Activated B cell treated with CpG ODN at 0.5 μM for 24 hours (primary cell): ENCODE measurements at regions of chr17 and their contacts with region 1.

Region 1: DNA sequence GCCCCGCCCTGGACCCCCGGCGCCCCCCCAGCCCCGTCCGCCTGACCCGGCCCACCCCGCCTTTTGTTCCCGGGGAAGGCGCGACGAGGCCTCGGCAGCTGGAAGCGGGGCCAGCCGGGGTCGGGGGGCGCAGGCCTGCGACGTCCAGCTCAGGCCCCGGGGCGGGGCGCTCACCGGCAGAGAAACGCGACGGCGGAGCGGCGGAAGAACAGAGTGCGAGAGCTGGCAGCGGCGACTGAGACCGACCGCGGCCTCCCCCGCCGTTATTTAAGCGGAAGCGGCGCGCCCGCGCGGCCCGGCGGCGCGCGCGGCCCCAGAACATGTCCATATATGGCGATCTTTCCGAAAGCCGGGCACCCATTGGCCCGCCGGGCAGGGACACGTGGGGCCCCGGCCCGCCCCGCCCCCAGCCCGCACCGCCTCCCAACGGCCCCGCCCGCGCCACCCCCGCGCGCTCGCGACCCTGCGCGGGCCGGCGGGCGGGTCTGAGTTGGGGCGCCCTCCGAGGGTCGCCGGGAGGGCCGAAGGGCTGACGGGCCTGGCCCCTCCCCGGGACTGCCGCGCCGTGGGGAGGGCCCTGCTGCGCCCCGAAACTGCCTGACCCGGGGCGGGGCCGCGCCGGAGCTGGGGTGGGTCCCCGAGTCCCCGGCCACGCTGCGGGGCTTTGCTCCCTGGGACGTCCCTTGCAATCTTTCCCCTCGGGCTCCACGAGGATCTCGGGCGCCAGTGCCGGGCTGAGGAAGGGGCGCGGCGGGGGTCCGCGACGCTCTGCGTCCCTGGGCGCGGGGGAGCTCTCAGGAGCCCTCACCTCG is at the start of gene ACTG1:
- DNase-seq: peak; percentile 89
- ATAC-seq: peak; percentile 32
- H3K4me3 Mint-ChIP-seq: peak within 1 kb of the TSS; percentile 99
- H3K27ac Mint-ChIP-seq: peak within 1 kb of the TSS; percentile 94
- H3K4me1 Mint-ChIP-seq: peaks cover 54% of the 10 kb centered on the region
- H3K27me3 Mint-ChIP-seq: no peaks in the 10 kb centered on the region
- CTCF ChIP-seq: no peak
- total RNA-seq, gene ACTG1: 2,863 and 2,949 TPM in 2 replicates

Region 2: DNA sequence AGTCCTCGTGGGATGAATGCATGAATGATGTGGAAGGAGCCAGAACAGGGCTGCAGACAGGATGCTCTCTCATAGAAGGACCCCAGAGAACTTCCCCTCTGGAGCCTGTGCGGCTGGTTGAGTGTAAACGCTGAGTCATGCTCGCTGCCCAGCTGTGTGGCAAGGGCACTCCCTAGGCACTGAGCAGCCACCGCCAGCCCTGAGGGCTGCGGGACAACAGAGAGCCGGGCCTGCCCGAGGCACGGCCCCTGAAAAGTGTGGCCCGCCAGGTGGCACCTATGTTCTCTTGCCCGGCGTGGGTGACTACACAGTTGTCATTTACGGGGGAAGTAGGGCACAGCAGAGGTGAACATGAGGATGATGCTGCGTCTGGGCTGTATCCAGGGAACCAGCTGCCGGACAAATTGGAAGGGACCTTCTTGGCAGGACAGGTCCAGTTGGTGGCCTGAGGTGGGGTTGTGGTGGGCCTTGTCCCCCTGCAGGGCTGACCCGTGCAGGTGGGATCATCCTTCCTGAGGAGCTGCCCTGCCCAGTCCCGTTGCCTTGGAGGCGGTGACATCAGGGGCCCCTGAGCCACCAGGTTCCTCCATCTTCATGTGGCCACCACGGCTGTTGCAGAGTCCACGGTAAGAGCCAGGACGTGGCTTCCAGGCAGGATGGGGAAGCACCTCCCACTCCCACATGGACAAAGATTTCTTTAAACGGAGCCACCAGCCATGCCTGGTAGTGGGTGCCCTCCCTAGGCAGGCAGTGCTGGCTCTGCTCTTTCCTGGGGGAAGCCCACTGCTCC is 1578.7 kb before region 1 on chr17:
- CTCF ChIA-PET with region 1: no interaction called
- POLR2A ChIA-PET with region 1: interaction called, 3 read pairs
- intact Hi-C with region 1: loop called (anchors 5 kb)
- DNase-seq: peak; percentile 48
- ATAC-seq: peak; percentile 25
- H3K4me3 Mint-ChIP-seq: peak overlapping the region; percentile 64
- H3K27ac Mint-ChIP-seq: peak overlapping the region; percentile 92
- H3K4me1 Mint-ChIP-seq: peaks cover 89% of the 10 kb centered on the region
- H3K27me3 Mint-ChIP-seq: peaks cover 3% of the 10 kb centered on the region
- CTCF ChIP-seq: no peak

Region 3: GRCh38 chr17:81294856-81295680 is 217.7 kb before region 1 on chr17 and contains the start of gene SLC38A10:
- CTCF ChIA-PET with region 1: interaction called, 6 read pairs
- POLR2A ChIA-PET with region 1: interaction called, 24 read pairs
- intact Hi-C with region 1: loop called (anchors 1 kb)
- DNase-seq: peak; percentile 92
- ATAC-seq: peak; percentile 86
- H3K4me3 Mint-ChIP-seq: peak within 1 kb of the TSS; percentile 95
- H3K27ac Mint-ChIP-seq: peak within 1 kb of the TSS; percentile 92
- H3K4me1 Mint-ChIP-seq: peaks cover 39% of the 10 kb centered on the region
- H3K27me3 Mint-ChIP-seq: no peaks in the 10 kb centered on the region
- CTCF ChIP-seq: no peak
- total RNA-seq, gene SLC38A10: 75.9 and 97.1 TPM in 2 replicates

Region 4: DNA sequence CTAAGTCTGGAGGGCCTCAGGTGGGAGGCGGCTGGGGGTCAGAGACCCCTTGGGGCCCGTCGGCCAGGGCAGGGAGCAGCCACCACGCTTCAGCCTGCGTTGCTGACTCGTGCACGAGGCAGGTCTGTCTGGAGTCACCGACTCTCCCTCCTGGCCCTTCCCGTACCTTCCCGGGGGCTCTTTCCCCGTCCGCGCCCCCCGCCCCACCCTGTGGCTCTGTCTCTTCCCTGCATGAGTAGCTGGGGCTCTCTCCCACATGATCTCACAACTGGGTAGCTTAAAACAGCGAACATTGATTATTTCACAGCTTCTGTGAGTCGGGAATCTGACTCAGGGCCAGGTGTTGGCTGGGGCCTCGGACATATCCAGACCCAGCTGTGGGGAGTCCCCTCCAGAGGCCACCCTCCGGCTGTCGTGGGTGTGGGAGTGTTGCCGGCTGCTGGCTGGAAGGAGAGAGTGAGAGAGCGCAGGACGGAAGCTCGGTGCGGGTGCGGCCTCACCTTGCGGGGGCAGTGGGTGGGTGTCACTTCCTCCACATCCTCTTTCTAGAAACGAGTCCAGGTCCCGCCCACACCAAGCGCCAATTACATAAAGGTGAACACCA is 100.2 kb before region 1 on chr17:
- CTCF ChIA-PET with region 1: no interaction called
- POLR2A ChIA-PET with region 1: no interaction called
- intact Hi-C with region 1: no loop called
- DNase-seq: no peak
- ATAC-seq: peak; percentile 76
- H3K4me3 Mint-ChIP-seq: peak overlapping the region; percentile 24
- H3K27ac Mint-ChIP-seq: no peak overlapping the region
- H3K4me1 Mint-ChIP-seq: peaks cover 16% of the 10 kb centered on the region
- H3K27me3 Mint-ChIP-seq: peaks cover 15% of the 10 kb centered on the region
- CTCF ChIP-seq: no peak

Region 5: GRCh38 chr17:81484195-81484979 is 28.4 kb before region 1 on chr17:
- CTCF ChIA-PET with region 1: interaction called, 7 read pairs
- POLR2A ChIA-PET with region 1: interaction called, 88 read pairs
- intact Hi-C with region 1: loop called (anchors 1 kb)
- DNase-seq: peak; percentile 94
- ATAC-seq: peak; percentile 67
- H3K4me3 Mint-ChIP-seq: peak overlapping the region; percentile 19
- H3K27ac Mint-ChIP-seq: no peak overlapping the region
- H3K4me1 Mint-ChIP-seq: peaks cover 25% of the 10 kb centered on the region
- H3K27me3 Mint-ChIP-seq: peaks cover 11% of the 10 kb centered on the region
- CTCF ChIP-seq: peak; percentile 70

Region 6: GRCh38 chr17:81558941-81559806 is 46.4 kb after region 1 on chr17:
- CTCF ChIA-PET with region 1: interaction called, 5 read pairs
- POLR2A ChIA-PET with region 1: interaction called, 188 read pairs
- intact Hi-C with region 1: no loop called
- DNase-seq: no peak
- ATAC-seq: no peak
- H3K4me3 Mint-ChIP-seq: no peak overlapping the region
- H3K27ac Mint-ChIP-seq: no peak overlapping the region
- H3K4me1 Mint-ChIP-seq: peaks cover 46% of the 10 kb centered on the region
- H3K27me3 Mint-ChIP-seq: no peaks in the 10 kb centered on the region
- CTCF ChIP-seq: no peak

Region 7: DNA sequence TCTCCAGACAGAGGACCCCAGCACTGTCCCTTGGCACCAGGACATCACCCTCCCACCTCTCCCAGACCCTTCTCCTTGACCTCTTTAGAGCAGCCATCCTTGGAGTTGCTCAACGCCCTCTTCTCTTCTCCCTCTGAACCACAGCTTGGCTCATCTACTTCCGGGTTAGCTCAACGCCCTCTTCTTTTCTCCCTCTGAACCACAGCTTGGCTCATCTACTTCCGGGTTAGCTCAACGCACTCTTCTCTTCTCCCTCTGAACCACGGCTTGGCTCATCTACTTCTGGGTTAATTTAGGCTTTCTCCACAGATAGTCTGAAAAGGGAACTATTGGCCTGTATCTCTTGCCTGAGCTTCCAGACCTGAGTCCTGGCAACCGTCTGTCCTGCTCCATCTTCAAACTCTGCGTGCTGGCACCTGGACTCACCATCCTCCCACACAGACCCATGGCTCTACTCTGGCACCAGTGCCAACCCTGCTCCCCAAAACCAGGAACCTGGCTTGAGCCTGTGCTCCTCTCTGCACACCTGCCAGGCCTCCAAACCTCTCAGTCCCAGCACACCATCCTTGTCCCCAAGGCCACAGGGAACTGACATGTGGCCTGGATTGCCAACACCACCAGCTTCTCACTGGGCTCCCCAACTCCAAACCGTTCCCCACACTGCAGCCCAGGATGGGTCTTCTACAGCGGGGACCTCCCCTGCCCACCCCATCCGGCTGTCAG is 64.7 kb after region 1 on chr17:
- CTCF ChIA-PET with region 1: no interaction called
- POLR2A ChIA-PET with region 1: no interaction called
- intact Hi-C with region 1: no loop called
- DNase-seq: no peak
- ATAC-seq: no peak
- H3K4me3 Mint-ChIP-seq: no peak overlapping the region
- H3K27ac Mint-ChIP-seq: no peak overlapping the region
- H3K4me1 Mint-ChIP-seq: peaks cover 8% of the 10 kb centered on the region
- H3K27me3 Mint-ChIP-seq: no peaks in the 10 kb centered on the region
- CTCF ChIP-seq: no peak

Region 8: DNA sequence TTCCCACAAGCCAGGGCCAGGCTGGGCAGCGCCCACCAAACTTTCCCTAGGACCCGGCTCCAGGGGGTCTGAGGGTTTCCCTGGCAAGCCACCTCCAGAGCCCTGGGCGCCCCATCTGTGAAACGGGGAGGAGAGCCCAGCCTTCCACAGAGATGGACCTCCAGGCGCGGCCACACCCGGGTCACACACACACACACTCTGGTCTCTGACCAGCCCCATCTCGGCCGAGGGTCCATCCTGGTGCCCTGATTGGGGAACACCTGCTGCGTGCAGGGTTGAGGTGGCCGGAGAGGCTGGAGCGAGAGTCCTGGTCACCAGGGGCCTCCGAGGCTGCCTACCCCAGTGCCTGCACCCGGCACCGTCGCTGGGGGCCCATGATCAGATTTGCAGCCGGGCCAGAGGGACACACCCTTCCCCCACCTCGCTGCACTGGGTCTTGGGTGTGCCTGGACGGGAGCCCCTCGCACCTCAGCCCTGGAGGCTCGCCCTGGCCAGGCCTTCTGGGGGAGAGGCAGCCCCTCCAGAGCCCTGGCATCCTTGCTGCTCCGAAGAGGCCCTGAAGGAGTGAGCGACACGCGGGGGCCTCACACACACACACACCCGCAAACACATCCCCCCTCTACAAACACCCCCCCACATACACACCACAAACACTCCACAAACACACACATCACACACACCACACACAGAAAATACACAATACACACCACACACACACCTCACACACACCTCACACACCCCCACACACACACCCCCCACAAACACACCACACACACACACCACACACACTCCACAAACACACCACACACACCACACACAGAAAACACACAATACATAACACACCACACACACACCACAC is 229.1 kb after region 1 on chr17:
- CTCF ChIA-PET with region 1: no interaction called
- POLR2A ChIA-PET with region 1: no interaction called
- intact Hi-C with region 1: no loop called
- DNase-seq: no peak
- ATAC-seq: no peak
- H3K4me3 Mint-ChIP-seq: no peak overlapping the region
- H3K27ac Mint-ChIP-seq: no peak overlapping the region
- H3K4me1 Mint-ChIP-seq: no peaks in the 10 kb centered on the region
- H3K27me3 Mint-ChIP-seq: peaks cover 6% of the 10 kb centered on the region
- CTCF ChIP-seq: no peak